Stomach (tissue), 19 donors: ENCODE measurements at regions of chr16 and their contacts with region 1.

Region 1: DNA sequence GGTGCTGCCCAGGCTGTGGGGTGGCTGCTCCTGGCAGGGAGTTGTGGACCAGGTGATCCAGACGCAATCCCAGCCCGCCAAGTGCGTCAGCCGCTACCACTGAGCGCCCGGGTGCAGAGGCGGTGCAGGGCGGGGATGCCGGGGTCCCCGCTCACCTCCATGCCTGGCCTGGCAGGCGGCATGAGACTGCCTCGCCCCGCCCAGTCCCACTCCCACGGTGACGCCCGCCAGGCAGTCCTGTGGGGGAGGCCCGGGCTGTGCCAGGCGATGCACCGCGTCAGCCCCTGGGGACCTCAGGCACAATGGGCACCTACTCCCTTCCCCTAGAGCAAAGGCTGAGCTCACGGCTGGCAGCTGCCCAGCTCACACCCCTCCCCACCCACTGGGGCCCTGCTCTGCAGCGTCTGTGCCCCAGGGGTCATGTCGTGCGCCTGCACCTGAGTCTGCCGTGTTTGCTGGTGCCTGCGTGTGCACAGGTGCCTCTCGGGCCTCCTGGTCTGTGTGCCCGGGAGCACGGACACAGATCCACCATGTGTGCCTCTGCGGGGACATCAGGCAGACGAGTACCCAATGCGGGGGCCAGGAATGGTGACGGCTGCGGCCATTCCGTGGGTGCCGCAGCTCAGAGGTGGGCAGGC is 5.3 kb downstream of the RPUSD1 start:
- DNase-seq: peak; percentile 69 to 81
- H3K4me3 ChIP-seq: peak overlapping the region in 1 of 4 donors; percentile 6
- H3K27ac ChIP-seq: peak overlapping the region in 3 of 5 donors; percentile 17 to 42 (median 20)
- H3K4me1 ChIP-seq: peaks cover 16 to 49% (median 40%) of the 10 kb centered on the region in 4 donors
- H3K27me3 ChIP-seq: peaks cover 0 to 53% (median 14%) of the 10 kb centered on the region in 3 donors
- CTCF ChIP-seq: no peak
- EP300 ChIP-seq: no peak
- POLR2A ChIP-seq: no peak

Region 2: GRCh38 chr16:714558-715476 is 68.1 kb before region 1 on chr16 and contains the start of gene METRN:
- intact Hi-C with region 1: loop called (anchors 5 kb)
- DNase-seq: peak; percentile 94 to 97
- H3K4me3 ChIP-seq: peak within 1 kb of the TSS; percentile 61 to 94 (median 68)
- H3K27ac ChIP-seq: peak within 1 kb of the TSS in 3 of 5 donors; percentile 17 to 69 (median 43)
- H3K4me1 ChIP-seq: peaks cover 24 to 59% (median 51%) of the 10 kb centered on the region in 4 donors
- H3K27me3 ChIP-seq: peaks cover 9 to 72% (median 23%) of the 10 kb centered on the region in 3 donors
- CTCF ChIP-seq: no peak
- EP300 ChIP-seq: no peak
- POLR2A ChIP-seq: no peak
- total RNA-seq, gene METRN: 7.1 to 79.7 (median 20.4) TPM